HEK293 (cell line): ENCODE measurements at regions of chr5 and their contacts with region 1.

Region 1: GRCh38 chr5:36305571-36306326 is 4.0 kb upstream of the RANBP3L start:
- H3K4me3 ChIP-seq: no peak overlapping the region
- H3K27ac ChIP-seq: no peak overlapping the region
- H3K4me1 ChIP-seq: peaks cover 19% of the 10 kb centered on the region
- CTCF ChIP-seq: peak; percentile 87

Region 2: GRCh38 chr5:36217992-36218391 is 87.8 kb before region 1 on chr5:
- CTCF ChIA-PET with region 1: interaction called, 10 read pairs
- POLR2A ChIA-PET with region 1: no interaction called
- H3K4me3 ChIP-seq: no peak overlapping the region
- H3K27ac ChIP-seq: no peak overlapping the region
- H3K4me1 ChIP-seq: 0 out of 2 replicates have a peak, but pooled peaks cover 2% of the 10 kb centered on the region
- CTCF ChIP-seq: no peak

Region 3: DNA sequence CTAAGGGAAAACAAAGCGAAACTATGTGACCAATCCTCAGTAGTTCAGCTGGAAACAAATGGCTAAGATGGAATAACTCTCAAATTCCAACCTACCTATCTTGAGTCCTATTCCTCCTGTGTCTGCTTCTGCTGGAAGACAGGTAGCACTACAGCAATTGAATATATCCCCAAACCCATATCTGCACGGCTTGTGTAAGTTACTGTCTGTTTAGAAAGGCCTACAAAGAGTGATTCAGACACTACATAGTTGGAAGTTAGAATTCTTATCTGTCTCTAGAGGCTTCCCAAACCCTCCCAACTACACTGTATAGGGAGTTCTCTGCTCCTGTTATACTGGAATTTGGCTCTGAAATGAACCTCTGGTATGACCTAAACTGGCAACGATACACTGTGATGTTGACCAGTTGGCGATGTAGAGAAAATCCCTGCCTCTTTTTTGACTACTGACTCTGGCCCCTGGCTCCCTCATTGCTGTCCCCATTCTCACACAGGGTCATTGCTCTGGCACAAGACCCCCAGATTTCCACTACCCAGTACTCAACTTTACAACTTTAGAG is 41.5 kb before region 1 on chr5:
- CTCF ChIA-PET with region 1: interaction called, 48 read pairs
- POLR2A ChIA-PET with region 1: no interaction called
- H3K4me3 ChIP-seq: no peak overlapping the region
- H3K27ac ChIP-seq: no peak overlapping the region
- H3K4me1 ChIP-seq: no peaks in the 10 kb centered on the region
- CTCF ChIP-seq: no peak

Region 4: DNA sequence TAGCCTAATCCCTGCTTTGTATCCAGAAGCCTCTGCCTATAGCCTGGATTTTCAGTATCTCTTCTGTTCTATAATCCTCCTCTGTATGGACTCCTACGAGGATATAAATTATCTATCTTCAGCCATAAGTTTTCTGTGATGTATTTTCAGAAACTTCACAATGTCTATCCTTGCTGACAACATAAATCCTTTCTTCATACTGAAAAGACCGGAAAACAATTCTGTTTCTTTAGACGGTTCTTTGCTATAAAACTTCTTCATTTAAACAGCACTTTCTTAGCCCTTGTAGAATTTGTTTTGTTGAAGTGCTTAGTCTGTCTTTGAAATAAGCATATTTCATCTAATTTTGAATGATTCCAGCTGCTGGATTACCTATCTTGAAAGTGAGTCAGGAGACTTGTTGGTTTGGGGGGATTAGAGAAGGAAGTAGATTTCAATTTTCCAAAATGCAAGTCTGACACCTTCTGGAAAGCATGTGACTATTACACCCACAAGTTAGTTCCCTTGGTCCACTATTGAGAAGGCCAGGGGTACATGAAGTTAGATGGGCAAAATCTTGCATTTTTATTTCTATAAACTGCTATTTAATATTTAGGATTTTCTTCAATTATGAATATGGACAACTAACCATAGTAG is 92.3 kb after region 1 on chr5:
- CTCF ChIA-PET with region 1: interaction called, 23 read pairs
- POLR2A ChIA-PET with region 1: no interaction called
- H3K4me3 ChIP-seq: no peak overlapping the region
- H3K27ac ChIP-seq: no peak overlapping the region
- H3K4me1 ChIP-seq: peaks cover 18% of the 10 kb centered on the region
- CTCF ChIP-seq: peak; percentile 72